Prostate gland (tissue), 2 donors: ENCODE measurements at regions of chr1 and their contacts with region 1.

Region 1: DNA sequence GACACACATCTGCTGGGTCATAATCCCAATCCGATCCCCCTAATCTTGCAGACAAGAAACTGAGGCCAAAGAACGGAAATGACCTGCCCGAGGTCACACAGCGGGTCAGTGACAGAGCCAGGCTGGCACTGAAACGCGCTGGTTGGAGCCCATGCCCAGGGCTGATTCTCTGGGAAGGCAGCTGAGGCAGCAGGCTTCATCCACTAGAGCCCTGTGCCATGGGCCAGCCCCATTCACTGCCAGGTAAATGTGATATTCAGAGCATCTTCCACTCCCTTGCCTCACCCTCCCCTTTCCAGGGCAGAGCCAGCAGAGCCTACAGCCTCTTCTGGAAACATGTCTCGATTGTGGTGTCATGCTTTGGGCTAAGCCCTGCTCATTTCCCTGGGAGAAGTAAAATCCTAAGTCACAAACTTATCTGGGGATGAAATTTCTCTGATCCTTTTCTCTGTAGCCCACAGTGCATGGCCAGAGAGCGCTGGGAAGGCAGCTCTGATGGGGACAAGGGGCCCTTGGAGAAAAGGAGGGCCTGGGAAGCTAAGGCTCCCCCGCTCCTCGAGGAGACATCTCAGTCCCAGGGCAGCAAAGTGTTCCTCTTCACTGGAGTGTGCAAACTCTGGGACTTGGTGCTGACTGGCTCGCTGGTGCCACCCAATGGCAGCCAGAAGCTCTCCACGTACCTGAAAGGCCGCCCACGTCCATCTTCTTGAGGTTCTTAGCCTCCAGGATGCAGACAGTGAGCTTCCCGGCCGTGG is 110.4 kb downstream of the SYT2 start:
- DNase-seq: peak; percentile 42
- H3K4me3 ChIP-seq: no peak overlapping the region
- H3K27ac ChIP-seq: peak overlapping the region; percentile 19 to 39
- H3K4me1 ChIP-seq: no peaks in the 10 kb centered on the region
- H3K27me3 ChIP-seq: no peaks in the 10 kb centered on the region
- CTCF ChIP-seq: peak; percentile 41 to 78 (median 62)
- POLR2A ChIP-seq: no peak

Region 2: GRCh38 chr1:202462342-202463076 is 137.3 kb before region 1 on chr1:
- intact Hi-C with region 1: loop called (anchors 5 kb)
- DNase-seq: peak; percentile 28
- H3K4me3 ChIP-seq: no peak overlapping the region
- H3K27ac ChIP-seq: peak overlapping the region; percentile 39 to 55
- H3K4me1 ChIP-seq: peaks cover 3% of the 10 kb centered on the region
- H3K27me3 ChIP-seq: no peaks in the 10 kb centered on the region
- CTCF ChIP-seq: no peak
- POLR2A ChIP-seq: no peak

Region 3: GRCh38 chr1:202710070-202711045 is 110.5 kb after region 1 on chr1 and contains the start of gene SYT2:
- intact Hi-C with region 1: loop called (anchors 10 kb)
- DNase-seq: no peak
- H3K4me3 ChIP-seq: peak within 1 kb of the TSS; percentile 6 to 24
- H3K27ac ChIP-seq: no peak within 1 kb of the TSS
- H3K4me1 ChIP-seq: peaks cover 7% of the 10 kb centered on the region
- H3K27me3 ChIP-seq: peaks cover 2% of the 10 kb centered on the region
- CTCF ChIP-seq: no peak
- POLR2A ChIP-seq: no peak
- total RNA-seq, gene SYT2: 0.09 to 7.1 TPM